GM10248 (cell line): ENCODE measurements at regions of chr12 and their contacts with region 1.

Region 1: DNA sequence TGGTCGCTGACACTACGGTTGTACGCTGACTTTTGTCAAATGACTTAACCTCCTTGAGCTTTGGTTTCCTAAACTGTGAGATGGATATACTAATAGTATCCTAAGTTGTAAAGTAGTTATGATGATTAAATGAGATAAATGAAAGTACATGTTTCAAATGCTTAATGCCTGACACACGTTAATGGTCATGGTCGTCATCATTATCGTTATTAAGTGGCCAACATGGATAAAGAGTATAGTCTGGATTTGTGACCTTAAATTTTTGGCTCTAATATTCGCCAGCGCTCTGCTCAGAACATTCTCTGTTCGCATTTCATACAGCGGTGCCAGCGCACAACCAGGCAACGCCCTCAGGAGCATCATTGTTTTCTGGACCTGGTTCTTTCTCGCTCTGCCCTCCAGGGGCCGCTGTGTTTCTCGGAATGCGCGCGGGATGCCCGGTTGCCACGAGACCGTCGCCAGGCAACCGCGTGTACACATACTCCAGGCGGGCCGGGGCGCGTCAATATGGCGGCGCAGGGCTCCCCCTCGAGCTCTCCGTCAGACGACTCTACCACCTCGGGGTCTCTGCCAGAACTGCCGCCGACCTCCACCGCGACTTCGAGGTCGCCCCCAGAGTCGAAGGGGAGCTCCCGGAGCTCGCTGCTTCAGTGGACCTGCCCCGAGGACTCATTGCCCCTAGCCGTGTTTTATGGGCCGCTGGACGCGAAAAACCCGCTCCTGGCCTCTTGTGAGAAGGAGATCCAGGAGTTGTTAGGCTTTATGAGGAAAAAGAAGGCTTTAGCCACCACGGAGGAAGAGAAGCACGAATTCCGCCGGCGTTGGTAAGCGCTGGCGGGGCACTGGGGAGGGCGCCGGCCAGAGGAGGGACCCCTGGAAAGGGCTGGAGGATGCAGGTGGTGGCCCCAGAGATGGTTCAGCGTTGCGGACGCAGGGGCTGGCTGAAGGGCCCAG is at the start of gene CFAP54:
- DNase-seq: peak; percentile 93
- CTCF ChIP-seq: peak; percentile 89

Region 2: DNA sequence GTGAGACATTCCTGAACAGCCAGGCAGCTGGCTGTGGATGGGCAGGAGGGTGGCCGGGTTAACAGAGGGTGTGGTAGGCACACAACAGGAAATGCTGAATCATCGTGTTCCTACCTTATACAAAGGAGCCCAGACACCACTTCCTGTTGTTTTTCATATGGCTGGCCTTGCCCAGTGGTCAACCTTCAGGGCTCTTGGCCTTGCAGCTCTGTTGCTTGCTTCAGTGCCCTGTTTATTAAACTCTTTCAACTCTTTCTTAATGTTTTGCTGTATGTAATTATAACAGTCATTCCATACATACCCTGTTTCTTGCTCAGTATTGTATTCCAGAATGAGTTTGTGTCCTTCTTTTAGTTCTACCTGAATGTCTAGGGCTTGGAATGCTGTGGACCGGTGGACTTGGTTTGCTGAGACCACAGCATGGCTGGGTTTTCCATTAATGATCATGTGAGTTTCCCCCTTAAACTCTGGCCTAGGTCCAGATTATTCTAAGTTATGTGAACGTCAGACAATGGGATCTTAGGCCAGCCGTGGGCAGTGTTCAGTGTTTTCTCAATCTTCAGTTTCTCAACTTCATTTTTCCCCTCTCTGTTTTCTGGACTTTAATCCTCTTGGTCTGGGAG is 11.9 kb after region 1 on chr12:
- CTCF ChIA-PET with region 1: interaction called, 13 read pairs
- POLR2A ChIA-PET with region 1: no interaction called
- DNase-seq: peak; percentile 30
- CTCF ChIP-seq: no peak

Region 3: GRCh38 chr12:96506776-96507175 is 17.4 kb after region 1 on chr12:
- CTCF ChIA-PET with region 1: interaction called, 13 read pairs
- POLR2A ChIA-PET with region 1: no interaction called
- DNase-seq: no peak
- CTCF ChIP-seq: no peak